Activated CD4-positive, alpha-beta T cell treated with anti-CD3 and anti-CD28 coated beads, Interleukin-2, amount 10 ng/mL, durations not matched to agents 7 days and 5 days (primary cell): ENCODE measurements at regions of chr3 and their contacts with region 1.

Region 1: GRCh38 chr3:114260152-114260551 is 22.8 kb upstream of the ZNF80 start:
- DNase-seq: no peak
- H3K4me3 Mint-ChIP-seq: no peak overlapping the region
- H3K27ac Mint-ChIP-seq: no peak overlapping the region
- H3K4me1 Mint-ChIP-seq: no peaks in the 10 kb centered on the region
- H3K27me3 Mint-ChIP-seq: peaks cover 2% of the 10 kb centered on the region

Region 2: GRCh38 chr3:114323546-114324254 is 63.5 kb after region 1 on chr3:
- CTCF ChIA-PET with region 1: no interaction called
- POLR2A ChIA-PET with region 1: no interaction called
- DNase-seq: no peak
- H3K4me3 Mint-ChIP-seq: no peak overlapping the region
- H3K27ac Mint-ChIP-seq: no peak overlapping the region
- H3K4me1 Mint-ChIP-seq: peaks cover 12% of the 10 kb centered on the region
- H3K27me3 Mint-ChIP-seq: no peaks in the 10 kb centered on the region

Region 3: DNA sequence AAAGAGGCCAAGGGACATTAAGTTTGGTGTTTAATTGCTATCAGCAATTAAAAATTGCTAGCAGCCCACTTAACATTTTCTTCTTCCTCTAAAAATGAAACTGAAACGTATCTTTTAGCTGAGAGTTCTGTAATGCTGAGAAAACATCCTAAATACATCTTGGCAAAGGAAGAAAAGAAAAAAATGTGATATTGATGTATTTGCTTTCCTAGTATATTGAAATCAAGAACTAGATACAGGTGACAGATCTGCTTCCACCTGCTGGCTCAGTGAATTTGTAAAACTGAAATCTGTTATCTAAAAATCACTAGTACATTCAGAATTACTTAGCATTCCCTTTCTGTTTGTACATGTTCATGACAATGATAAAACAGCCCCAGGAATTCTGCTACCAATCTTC is 603.7 kb after region 1 on chr3:
- CTCF ChIA-PET with region 1: no interaction called
- POLR2A ChIA-PET with region 1: interaction called, 14 read pairs
- DNase-seq: no peak
- H3K4me3 Mint-ChIP-seq: peak overlapping the region; percentile 63
- H3K27ac Mint-ChIP-seq: peak overlapping the region; percentile 83
- H3K4me1 Mint-ChIP-seq: peaks cover 17% of the 10 kb centered on the region
- H3K27me3 Mint-ChIP-seq: no peaks in the 10 kb centered on the region